Activated T-helper 2 cell treated with anti-CD3 and anti-CD28 coated beads, Interferon-gamma antibody, Interleukin-2, Interleukin-4, amounts not matched to agents 10 μg/mL and 5 μg/mL and 100 μg/mL, durations not matched to agents 14 hours and 24 hours and 36 hours (primary cell): ENCODE measurements at regions of chr6 and their contacts with region 1.

Region 1: GRCh38 chr6:89873721-89874120 is 20.5 kb upstream of the GJA10 start:
- DNase-seq: no peak
- H3K4me3 Mint-ChIP-seq: no peak overlapping the region
- H3K27ac Mint-ChIP-seq: no peak overlapping the region
- H3K4me1 Mint-ChIP-seq: peaks cover 7% of the 10 kb centered on the region
- H3K27me3 Mint-ChIP-seq: no peaks in the 10 kb centered on the region

Region 2: DNA sequence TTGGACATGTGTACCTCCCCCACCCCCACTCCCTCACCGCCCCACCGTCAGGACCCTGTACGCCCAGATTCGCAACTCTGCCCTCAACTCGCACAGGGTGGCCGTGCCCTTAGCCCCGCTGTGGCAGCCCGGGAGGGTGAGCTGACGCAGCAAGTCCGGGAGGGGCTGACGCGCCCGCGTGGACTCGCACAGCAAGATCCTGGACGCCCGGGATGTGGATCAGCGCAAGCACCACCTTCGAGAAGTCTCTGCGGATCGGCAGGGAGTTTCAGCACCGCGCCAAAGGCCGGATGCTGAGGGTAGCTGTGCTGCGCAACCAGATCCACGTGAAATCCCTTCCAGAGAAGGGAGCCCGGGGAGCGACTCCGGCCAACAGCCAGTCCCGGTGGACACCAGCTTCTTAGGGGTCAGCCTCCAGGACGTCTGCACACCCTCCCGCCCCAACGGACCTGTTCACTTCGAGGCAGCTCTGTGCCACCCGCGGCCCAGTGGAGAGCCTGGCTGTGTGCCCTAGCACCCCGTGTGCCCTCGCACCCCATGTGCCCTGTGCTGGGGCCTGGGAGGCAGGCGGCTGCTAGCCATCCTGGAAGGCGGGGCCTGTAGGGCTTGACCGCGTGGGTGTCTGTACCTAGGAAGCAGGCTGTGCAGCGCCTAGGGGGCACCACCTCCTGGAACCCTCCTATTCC is 13.9 kb after region 1 on chr6:
- intact Hi-C with region 1: loop called (anchors 2 kb)
- DNase-seq: no peak
- H3K4me3 Mint-ChIP-seq: no peak overlapping the region
- H3K27ac Mint-ChIP-seq: no peak overlapping the region
- H3K4me1 Mint-ChIP-seq: peaks cover 9% of the 10 kb centered on the region
- H3K27me3 Mint-ChIP-seq: peaks cover 26% of the 10 kb centered on the region